ENCODE measurements at regions of chr6 and their contacts with region 1.

Region 1: GRCh38 chr6:160992061-160992979 is 751 bp downstream of the MAP3K4 start:
- DNase-seq: peak; percentile 48 to 78 (median 50)
- ATAC-seq: peak in 3 of 4 donors; percentile 64 to 69 (median 66)
- H3K4me3 ChIP-seq: peak overlapping the region; percentile 79 to 98 (median 91)
- H3K27ac ChIP-seq: peak overlapping the region; percentile 93 to 99 (median 96)
- H3K4me1 ChIP-seq: peaks cover 0 to 38% (median 19%) of the 10 kb centered on the region in 12 donors
- H3K27me3 ChIP-seq: no peaks in the 10 kb centered on the region
- CTCF ChIP-seq: peak; percentile 31 to 75 (median 56)
- POLR2A ChIP-seq: no peak

Region 2: DNA sequence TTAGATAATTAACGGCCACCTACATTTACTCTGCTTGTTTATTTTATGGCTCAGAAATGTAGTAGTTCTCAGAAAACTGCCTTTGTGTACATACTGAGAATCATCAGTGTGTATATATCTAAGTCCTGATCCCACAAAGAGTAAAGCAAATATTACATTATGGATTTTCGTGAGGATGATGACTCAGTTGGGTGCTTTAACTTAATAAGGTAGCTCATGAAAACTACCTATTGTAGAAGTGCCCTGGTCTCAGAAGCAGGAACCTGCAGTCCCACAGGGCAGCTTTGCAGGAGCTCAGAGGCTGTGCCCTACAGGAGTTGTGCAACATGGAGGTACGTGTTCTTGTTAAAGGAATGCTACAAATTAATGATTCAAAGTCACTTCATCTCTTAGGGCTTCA is 182.1 kb before region 1 on chr6:
- intact Hi-C with region 1: no loop called
- DNase-seq: no peak
- ATAC-seq: no peak
- H3K4me3 ChIP-seq: no peak overlapping the region
- H3K27ac ChIP-seq: no peak overlapping the region
- H3K4me1 ChIP-seq: no peaks in the 10 kb centered on the region
- H3K27me3 ChIP-seq: no peaks in the 10 kb centered on the region
- CTCF ChIP-seq: no peak
- POLR2A ChIP-seq: no peak

Region 3: GRCh38 chr6:161079566-161080262 is 87.4 kb after region 1 on chr6:
- intact Hi-C with region 1: loop called in 1 of 10 experiments (anchors 10 kb)
- DNase-seq: peak in 1 of 5 donors; percentile 55
- ATAC-seq: peak in 2 of 4 donors; percentile 30 to 75
- H3K4me3 ChIP-seq: no peak overlapping the region
- H3K27ac ChIP-seq: no peak overlapping the region
- H3K4me1 ChIP-seq: peaks cover 0 to 16% (median 4%) of the 10 kb centered on the region in 12 donors
- H3K27me3 ChIP-seq: no peaks in the 10 kb centered on the region
- CTCF ChIP-seq: no peak
- POLR2A ChIP-seq: no peak

Region 4: GRCh38 chr6:161152907-161153662 is 160.8 kb after region 1 on chr6:
- intact Hi-C with region 1: no loop called
- DNase-seq: no peak
- ATAC-seq: peak; percentile 38 to 65 (median 50)
- H3K4me3 ChIP-seq: no peak overlapping the region
- H3K27ac ChIP-seq: no peak overlapping the region
- H3K4me1 ChIP-seq: peaks cover 0 to 3% (median 0%) of the 10 kb centered on the region in 12 donors
- H3K27me3 ChIP-seq: no peaks in the 10 kb centered on the region
- CTCF ChIP-seq: peak in 11 of 12 donors; percentile 19 to 53 (median 42)
- POLR2A ChIP-seq: no peak